ENCODE measurements at regions of chr9 and their contacts with region 1.

Region 1: DNA sequence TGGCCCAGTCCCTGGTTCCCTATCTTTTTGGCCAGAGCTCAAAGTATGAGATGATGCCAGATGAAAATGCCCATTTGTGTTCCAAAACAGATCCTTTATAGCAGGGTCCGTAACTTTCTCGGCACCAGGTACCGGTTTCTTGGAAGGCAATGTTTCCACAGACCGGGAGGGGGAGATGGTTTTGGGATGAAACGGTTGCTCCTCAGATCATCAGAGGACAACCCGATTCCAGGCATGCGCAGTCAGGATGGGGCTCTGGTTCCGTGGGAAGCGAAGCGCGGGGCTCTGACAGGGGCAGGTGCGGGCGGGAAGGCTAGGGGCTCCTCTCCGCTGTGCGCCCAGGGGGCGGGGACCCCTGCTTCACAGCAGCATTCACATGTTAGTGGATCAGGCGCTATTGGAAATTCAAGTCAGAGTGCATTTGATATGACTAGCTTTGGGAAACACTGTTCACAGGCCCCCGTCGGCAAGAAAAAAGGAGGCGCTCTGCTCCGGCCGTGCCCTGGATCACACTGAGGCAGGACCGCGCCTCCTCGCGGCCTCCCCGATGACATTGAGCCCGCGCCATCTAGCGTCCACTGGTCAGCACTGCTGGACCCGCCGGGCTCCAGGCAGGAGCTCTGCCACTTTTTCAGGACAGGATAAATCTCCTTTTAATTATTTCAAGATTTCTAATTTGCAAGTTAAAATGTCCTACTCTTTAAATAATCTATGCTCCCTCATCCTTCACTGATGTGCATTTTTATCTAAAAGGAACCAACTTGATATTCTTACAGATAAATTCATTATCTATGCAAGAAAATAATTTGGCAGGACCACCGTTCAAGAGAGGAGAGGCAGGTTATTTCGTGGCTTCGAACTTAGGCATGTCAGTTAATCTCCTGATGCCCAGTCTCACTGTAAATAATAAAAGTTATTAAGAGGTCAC is 190.0 kb downstream of the FANCC start:
- DNase-seq: no peak
- H3K4me3 ChIP-seq: peak overlapping the region; percentile 41
- CTCF ChIP-seq: peak; percentile 100

Region 2: GRCh38 chr9:94681508-94681907 is 446.0 kb before region 1 on chr9:
- CTCF ChIA-PET with region 1: interaction called, 341 read pairs
- POLR2A ChIA-PET with region 1: interaction called, 3 read pairs
- DNase-seq: no peak
- H3K4me3 ChIP-seq: no peak overlapping the region
- CTCF ChIP-seq: peak; percentile 71

Region 3: DNA sequence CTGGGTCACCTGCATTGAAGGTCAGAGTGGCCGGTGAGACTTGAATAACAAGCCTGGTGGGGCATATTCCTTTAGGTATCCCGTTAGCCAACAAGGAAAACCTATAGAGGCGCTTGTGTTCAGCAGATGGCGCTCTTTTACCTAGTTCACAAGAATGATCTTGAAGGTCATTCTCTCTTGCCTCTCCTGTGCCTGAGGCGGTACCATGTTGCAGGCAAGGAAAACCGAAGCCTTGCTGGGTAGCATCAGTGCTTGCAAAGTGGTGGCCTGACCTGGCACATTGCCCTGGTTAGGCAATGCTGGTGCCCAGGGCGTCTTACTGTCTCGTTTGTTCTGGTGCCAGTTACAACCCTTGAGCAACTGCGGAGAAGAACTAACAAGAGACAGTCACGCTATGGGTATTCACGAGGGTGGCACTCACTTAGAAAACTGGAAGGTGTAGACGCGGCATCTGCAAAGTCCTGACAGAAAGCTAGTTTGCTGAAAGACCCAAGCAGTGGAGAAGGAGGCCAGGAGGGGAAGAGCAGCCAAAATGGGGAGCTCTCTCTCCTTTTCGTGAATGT is 344.3 kb before region 1 on chr9:
- CTCF ChIA-PET with region 1: interaction called, 79 read pairs
- POLR2A ChIA-PET with region 1: no interaction called
- DNase-seq: peak; percentile 71
- H3K4me3 ChIP-seq: no peak overlapping the region; the same call in 1 of the 2 replicates
- CTCF ChIP-seq: peak; percentile 57

Region 4: GRCh38 chr9:95073021-95073607 is 54.4 kb before region 1 on chr9:
- CTCF ChIA-PET with region 1: interaction called, 10 read pairs
- POLR2A ChIA-PET with region 1: no interaction called
- DNase-seq: no peak
- H3K4me3 ChIP-seq: no peak overlapping the region
- CTCF ChIP-seq: peak; percentile 33

Region 5: GRCh38 chr9:95116003-95116807 is 11.3 kb before region 1 on chr9:
- CTCF ChIA-PET with region 1: interaction called, 128 read pairs
- POLR2A ChIA-PET with region 1: no interaction called
- DNase-seq: no peak
- H3K4me3 ChIP-seq: no peak overlapping the region
- CTCF ChIP-seq: no peak

Region 6: GRCh38 chr9:95157481-95158151 is 30.1 kb after region 1 on chr9:
- CTCF ChIA-PET with region 1: interaction called, 30 read pairs
- POLR2A ChIA-PET with region 1: no interaction called
- DNase-seq: peak; percentile 71
- H3K4me3 ChIP-seq: no peak overlapping the region
- CTCF ChIP-seq: no peak